AG04449 (cell line): ENCODE measurements at regions of chr22 and their contacts with region 1.

Region 1: GRCh38 chr22:19948057-19948760 is 6.6 kb upstream of the TXNRD2 start:
- DNase-seq: no peak
- H3K4me3 ChIP-seq: no peak overlapping the region
- CTCF ChIP-seq: no peak

Region 2: DNA sequence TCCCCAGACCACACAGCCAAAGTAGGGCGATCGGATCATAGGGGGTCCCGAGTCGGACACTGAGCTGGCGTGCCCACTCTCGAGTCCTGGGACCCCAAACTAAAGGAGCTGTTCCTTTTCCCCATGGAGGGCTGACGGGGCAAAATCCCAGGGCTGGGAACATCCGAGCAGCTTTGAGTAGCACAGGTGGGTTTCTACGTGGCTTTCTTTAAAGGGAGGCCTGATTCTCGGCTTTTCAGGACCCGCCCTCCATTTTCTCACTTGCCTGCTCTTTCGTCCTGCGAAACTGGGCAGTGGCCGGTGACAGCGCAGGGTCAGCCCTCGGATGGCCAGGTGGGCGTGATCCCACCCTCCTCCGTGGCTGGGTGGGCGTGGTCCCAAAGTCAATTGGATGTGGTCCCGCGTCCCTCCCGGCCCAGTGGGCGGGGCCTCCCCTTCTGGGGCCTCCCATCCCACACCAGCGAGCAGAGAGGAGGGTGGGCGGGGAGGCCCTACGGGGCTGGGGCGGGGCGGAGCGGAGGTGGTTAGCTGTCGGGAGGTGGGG is 10.9 kb after region 1 on chr22:
- CTCF ChIA-PET with region 1: interaction called, 26 read pairs
- POLR2A ChIA-PET with region 1: no interaction called
- DNase-seq: no peak
- H3K4me3 ChIP-seq: peak overlapping the region; percentile 23; the same call in 1 of the 2 replicates
- CTCF ChIP-seq: no peak